B cell (primary cell): ENCODE measurements at regions of chr2 and their contacts with region 1.

Region 1: GRCh38 chr2:86079981-86080911 is 25.4 kb downstream of the POLR1A start:
- DNase-seq: peak; percentile 88
- ATAC-seq: peak; percentile 76
- H3K4me3 ChIP-seq: no peak overlapping the region
- H3K4me3 Mint-ChIP-seq: peak overlapping the region; percentile 66
- H3K27ac ChIP-seq: peak overlapping the region; percentile 83 to 88
- H3K27ac Mint-ChIP-seq: peak overlapping the region; percentile 94
- H3K4me1 ChIP-seq: peaks cover 22 to 35% of the 10 kb centered on the region in 2 donors
- H3K4me1 Mint-ChIP-seq: peaks cover 37% of the 10 kb centered on the region
- H3K27me3 ChIP-seq: no peaks in the 10 kb centered on the region
- H3K27me3 Mint-ChIP-seq: no peaks in the 10 kb centered on the region
- CTCF ChIP-seq: peak; percentile 78

Region 2: DNA sequence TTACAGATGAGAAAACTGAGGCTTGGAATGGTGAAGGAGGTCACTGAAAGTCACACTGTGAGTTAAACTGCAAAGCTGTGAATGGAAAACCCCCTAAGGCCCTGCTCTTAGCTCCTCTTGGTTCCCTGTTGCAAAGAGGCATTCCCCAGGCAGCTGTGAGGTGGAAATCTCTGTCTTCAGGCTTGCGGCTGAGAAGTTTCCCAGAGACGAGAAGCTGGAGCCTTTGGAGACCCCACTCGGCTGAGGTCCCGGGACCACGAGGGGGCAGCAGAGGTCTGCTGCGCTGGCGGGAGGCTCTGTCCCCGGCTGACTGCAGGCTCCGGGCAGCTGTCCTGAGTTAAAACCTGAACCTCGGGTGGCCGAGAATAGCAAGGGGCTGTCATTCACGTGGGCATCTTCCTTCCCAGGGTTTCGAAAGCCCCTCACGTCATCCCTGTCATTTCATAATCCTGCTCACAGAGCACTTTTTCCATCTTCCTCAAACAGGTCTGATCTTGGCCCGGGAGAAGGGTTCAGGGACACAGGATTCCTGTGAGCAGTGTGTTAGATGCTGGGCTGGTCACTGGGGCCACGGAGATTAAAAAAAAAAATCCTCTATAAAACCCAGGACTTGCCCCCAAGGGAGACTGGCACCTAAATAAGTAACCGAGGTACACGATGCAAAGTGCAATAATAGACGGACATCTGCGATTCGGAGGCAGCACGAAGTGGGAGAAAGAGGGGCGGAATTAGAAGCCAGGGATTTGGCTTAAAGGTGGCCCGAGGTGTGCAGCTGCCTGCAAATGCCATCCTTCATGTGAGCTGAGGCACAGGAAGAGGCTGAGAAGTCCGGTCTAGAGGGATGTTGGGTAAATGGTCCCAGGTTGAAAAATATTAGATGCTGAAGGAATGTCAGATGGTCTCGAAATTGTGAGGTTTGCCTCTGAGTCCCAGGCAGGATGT is 351.1 kb before region 1 on chr2:
- CTCF ChIA-PET with region 1: interaction called, 17 read pairs
- POLR2A ChIA-PET with region 1: no interaction called
- intact Hi-C with region 1: loop called (anchors 1 kb)
- DNase-seq: peak; percentile 80
- ATAC-seq: peak; percentile 88
- H3K4me3 ChIP-seq: no peak overlapping the region
- H3K4me3 Mint-ChIP-seq: no peak overlapping the region
- H3K27ac ChIP-seq: no peak overlapping the region
- H3K27ac Mint-ChIP-seq: no peak overlapping the region
- H3K4me1 ChIP-seq: peaks cover 3 to 7% of the 10 kb centered on the region in 2 donors
- H3K4me1 Mint-ChIP-seq: no peaks in the 10 kb centered on the region
- H3K27me3 ChIP-seq: peaks cover 0 to 10% (median 3%) of the 10 kb centered on the region in 4 experiments
- H3K27me3 Mint-ChIP-seq: peaks cover 23% of the 10 kb centered on the region
- CTCF ChIP-seq: peak; percentile 96

Region 3: DNA sequence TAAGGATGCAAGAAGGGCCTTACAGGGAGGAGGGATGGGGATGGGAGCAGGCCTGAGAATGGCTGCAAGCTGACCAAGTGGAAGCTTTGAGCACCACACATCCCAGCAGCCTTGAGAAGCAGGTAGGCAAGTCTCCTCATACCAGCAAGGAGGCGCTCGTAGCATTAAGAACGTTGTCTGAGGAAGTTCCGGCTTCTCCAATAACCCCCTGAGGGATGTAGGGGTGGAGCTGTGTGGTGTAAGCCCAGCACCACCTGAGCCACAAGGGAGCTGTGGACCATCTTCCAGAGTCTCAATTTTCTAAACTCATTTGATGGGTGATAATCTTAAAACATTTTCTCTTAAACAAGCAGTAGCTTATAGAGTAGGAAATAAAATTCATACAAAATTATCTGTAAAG is 242.1 kb before region 1 on chr2:
- CTCF ChIA-PET with region 1: interaction called, 528 read pairs
- POLR2A ChIA-PET with region 1: no interaction called
- intact Hi-C with region 1: no loop called
- DNase-seq: no peak
- ATAC-seq: no peak
- H3K4me3 ChIP-seq: no peak overlapping the region
- H3K4me3 Mint-ChIP-seq: no peak overlapping the region
- H3K27ac ChIP-seq: peak overlapping the region in 1 of 2 donors; percentile 16
- H3K27ac Mint-ChIP-seq: peak overlapping the region; percentile 24
- H3K4me1 ChIP-seq: peaks cover 3 to 10% of the 10 kb centered on the region in 2 donors
- H3K4me1 Mint-ChIP-seq: peaks cover 28% of the 10 kb centered on the region
- H3K27me3 ChIP-seq: no peaks in the 10 kb centered on the region
- H3K27me3 Mint-ChIP-seq: no peaks in the 10 kb centered on the region
- CTCF ChIP-seq: no peak

Region 4: GRCh38 chr2:85852937-85853498 is 227.2 kb before region 1 on chr2:
- CTCF ChIA-PET with region 1: interaction called, 5 read pairs
- POLR2A ChIA-PET with region 1: interaction called, 3 read pairs
- intact Hi-C with region 1: loop called (anchors 1 kb)
- DNase-seq: peak; percentile 81
- ATAC-seq: peak; percentile 82
- H3K4me3 ChIP-seq: peak overlapping the region; percentile 29 to 56 (median 38)
- H3K4me3 Mint-ChIP-seq: peak overlapping the region; percentile 87
- H3K27ac ChIP-seq: peak overlapping the region; percentile 95 to 100
- H3K27ac Mint-ChIP-seq: peak overlapping the region; percentile 99
- H3K4me1 ChIP-seq: peaks cover 49 to 53% of the 10 kb centered on the region in 2 donors
- H3K4me1 Mint-ChIP-seq: peaks cover 70% of the 10 kb centered on the region
- H3K27me3 ChIP-seq: no peaks in the 10 kb centered on the region
- H3K27me3 Mint-ChIP-seq: no peaks in the 10 kb centered on the region
- CTCF ChIP-seq: no peak

Region 5: GRCh38 chr2:85999061-85999831 is 81.0 kb before region 1 on chr2:
- CTCF ChIA-PET with region 1: interaction called, 8 read pairs
- POLR2A ChIA-PET with region 1: no interaction called
- intact Hi-C with region 1: loop called (anchors 2 kb)
- DNase-seq: peak; percentile 64
- ATAC-seq: peak; percentile 73
- H3K4me3 ChIP-seq: peak overlapping the region in 3 of 5 experiments; percentile 16 to 52 (median 27)
- H3K4me3 Mint-ChIP-seq: peak overlapping the region; percentile 59
- H3K27ac ChIP-seq: peak overlapping the region; percentile 79 to 87
- H3K27ac Mint-ChIP-seq: peak overlapping the region; percentile 93
- H3K4me1 ChIP-seq: peaks cover 73 to 74% of the 10 kb centered on the region in 2 donors
- H3K4me1 Mint-ChIP-seq: peaks cover 78% of the 10 kb centered on the region
- H3K27me3 ChIP-seq: no peaks in the 10 kb centered on the region
- H3K27me3 Mint-ChIP-seq: no peaks in the 10 kb centered on the region
- CTCF ChIP-seq: no peak

Region 6: DNA sequence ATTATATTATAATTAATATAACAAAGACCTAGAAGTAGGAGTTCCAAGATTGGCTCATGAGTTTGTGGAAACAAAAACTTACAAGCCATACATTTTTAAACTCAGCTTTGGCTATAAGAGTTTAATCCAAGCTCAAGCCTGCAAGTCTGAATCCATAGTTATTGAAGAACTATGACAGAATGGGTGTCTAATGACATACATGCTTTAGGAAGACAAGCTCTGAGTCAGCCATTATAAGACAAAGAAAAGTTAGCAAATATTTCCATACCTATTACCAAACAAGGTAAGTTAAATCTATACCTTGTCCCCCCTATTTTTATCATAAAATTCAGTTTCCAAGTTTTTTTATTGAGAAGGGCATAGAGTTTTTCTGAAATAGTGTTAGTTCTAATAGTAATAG is 70.2 kb before region 1 on chr2:
- CTCF ChIA-PET with region 1: no interaction called
- POLR2A ChIA-PET with region 1: no interaction called
- intact Hi-C with region 1: no loop called
- DNase-seq: no peak
- ATAC-seq: no peak
- H3K4me3 ChIP-seq: no peak overlapping the region
- H3K4me3 Mint-ChIP-seq: no peak overlapping the region
- H3K27ac ChIP-seq: no peak overlapping the region
- H3K27ac Mint-ChIP-seq: no peak overlapping the region
- H3K4me1 ChIP-seq: peaks cover 5 to 24% of the 10 kb centered on the region in 2 donors
- H3K4me1 Mint-ChIP-seq: peaks cover 35% of the 10 kb centered on the region
- H3K27me3 ChIP-seq: no peaks in the 10 kb centered on the region
- H3K27me3 Mint-ChIP-seq: no peaks in the 10 kb centered on the region
- CTCF ChIP-seq: no peak

Region 7: DNA sequence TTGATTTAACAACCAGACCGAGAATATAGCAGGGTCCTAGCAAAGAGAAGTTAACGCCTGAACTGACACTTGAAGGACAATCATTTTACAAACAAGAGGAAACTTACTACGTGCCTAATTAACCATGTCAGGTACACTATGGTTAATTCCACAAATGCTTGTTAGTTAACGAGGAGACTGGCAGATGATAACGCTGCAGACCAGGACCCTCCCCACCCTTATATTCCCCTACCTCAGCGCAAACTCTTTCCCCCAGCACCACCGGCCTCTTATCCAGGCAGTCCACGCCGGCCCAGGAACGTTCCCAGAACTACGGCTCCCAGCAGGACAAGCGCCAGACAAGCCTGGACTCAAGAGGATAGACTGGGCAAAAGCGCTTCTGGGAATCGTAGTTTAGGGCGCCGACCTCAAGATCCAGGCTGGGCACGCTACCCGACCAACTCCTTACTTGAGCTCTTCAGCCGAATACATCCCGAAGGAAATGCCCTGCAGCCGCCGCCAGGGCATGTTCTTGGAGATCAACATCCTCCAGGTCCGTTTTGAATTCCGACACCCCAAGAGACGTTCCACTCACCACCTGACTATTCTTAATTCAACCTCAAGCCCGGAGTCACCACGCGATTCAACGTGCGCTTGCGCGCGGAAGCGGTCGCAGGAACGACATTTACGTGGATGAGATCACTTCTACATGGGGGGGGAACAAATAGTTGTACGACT is 25.2 kb after region 1 on chr2 and contains the start of gene POLR1A:
- CTCF ChIA-PET with region 1: interaction called, 5 read pairs
- POLR2A ChIA-PET with region 1: no interaction called
- intact Hi-C with region 1: loop called (anchors 1 kb)
- DNase-seq: peak; percentile 95
- ATAC-seq: peak; percentile 76
- H3K4me3 ChIP-seq: peak within 1 kb of the TSS; percentile 88 to 96 (median 89)
- H3K4me3 Mint-ChIP-seq: peak within 1 kb of the TSS; percentile 93
- H3K27ac ChIP-seq: peak within 1 kb of the TSS; percentile 74 to 92
- H3K27ac Mint-ChIP-seq: peak within 1 kb of the TSS; percentile 95
- H3K4me1 ChIP-seq: peaks cover 16 to 22% of the 10 kb centered on the region in 2 donors
- H3K4me1 Mint-ChIP-seq: peaks cover 50% of the 10 kb centered on the region
- H3K27me3 ChIP-seq: no peaks in the 10 kb centered on the region
- H3K27me3 Mint-ChIP-seq: no peaks in the 10 kb centered on the region
- CTCF ChIP-seq: no peak
- total RNA-seq, gene POLR1A: 32.7 and 36.8 TPM in 2 replicates

Region 8: GRCh38 chr2:86695053-86695691 is 614.9 kb after region 1 on chr2:
- CTCF ChIA-PET with region 1: no interaction called
- POLR2A ChIA-PET with region 1: no interaction called
- intact Hi-C with region 1: no loop called
- DNase-seq: no peak
- ATAC-seq: no peak
- H3K4me3 ChIP-seq: no peak overlapping the region
- H3K4me3 Mint-ChIP-seq: no peak overlapping the region
- H3K27ac ChIP-seq: no peak overlapping the region
- H3K27ac Mint-ChIP-seq: no peak overlapping the region
- H3K4me1 ChIP-seq: peaks cover 5% of the 10 kb centered on the region in 2 donors
- H3K4me1 Mint-ChIP-seq: peaks cover 4% of the 10 kb centered on the region
- H3K27me3 ChIP-seq: no peaks in the 10 kb centered on the region
- H3K27me3 Mint-ChIP-seq: no peaks in the 10 kb centered on the region
- CTCF ChIP-seq: no peak